Stomach (tissue), 19 donors: ENCODE measurements at regions of chr11 and their contacts with region 1.

Region 1: GRCh38 chr11:11028017-11028692 is 170.3 kb upstream of the ZBED5 start:
- DNase-seq: peak; percentile 74 to 84
- H3K4me3 ChIP-seq: no peak overlapping the region
- H3K27ac ChIP-seq: no peak overlapping the region
- H3K4me1 ChIP-seq: no peaks in the 10 kb centered on the region
- H3K27me3 ChIP-seq: no peaks in the 10 kb centered on the region
- CTCF ChIP-seq: peak in 5 of 7 experiments; percentile 34 to 71 (median 62)
- EP300 ChIP-seq: no peak
- POLR2A ChIP-seq: no peak

Region 2: DNA sequence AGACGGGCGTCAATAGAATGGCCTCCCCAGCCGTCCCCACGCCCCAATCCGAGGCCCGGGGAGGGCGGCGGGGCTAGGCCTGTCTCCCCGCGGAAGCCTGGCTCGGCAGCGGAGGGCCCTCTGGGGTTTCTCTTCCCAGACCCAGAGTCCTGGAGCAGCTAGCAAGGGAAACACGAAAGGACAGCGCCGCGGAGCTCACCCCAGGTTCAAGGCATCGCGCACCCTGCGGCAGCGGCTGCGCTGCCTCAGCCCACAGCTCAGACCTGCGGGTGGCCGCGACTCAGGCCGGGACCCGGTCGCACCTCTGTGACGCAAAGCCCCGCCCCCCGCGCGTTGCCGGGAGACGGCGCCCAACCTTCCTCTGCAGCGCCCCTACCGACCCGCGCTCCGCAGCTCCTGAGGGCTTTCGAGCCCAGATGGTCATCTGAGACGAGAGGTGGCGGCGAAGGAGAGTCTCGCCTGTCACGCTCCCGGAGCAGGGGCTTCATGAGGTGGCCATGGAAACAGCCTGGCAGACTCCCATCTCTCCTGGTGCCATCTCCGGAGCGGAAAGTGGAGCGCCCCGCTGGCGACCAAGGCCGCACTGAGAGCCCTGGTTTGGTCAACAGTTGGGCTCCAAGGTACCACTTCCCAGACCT is 487.1 kb before region 1 on chr11 and contains the start of gene RNF141:
- intact Hi-C with region 1: no loop called
- DNase-seq: peak; percentile 97 to 98
- H3K4me3 ChIP-seq: peak within 1 kb of the TSS; percentile 70 to 87 (median 80)
- H3K27ac ChIP-seq: peak within 1 kb of the TSS; percentile 89 to 96 (median 95)
- H3K4me1 ChIP-seq: peaks cover 3 to 23% (median 16%) of the 10 kb centered on the region in 4 donors
- H3K27me3 ChIP-seq: no peaks in the 10 kb centered on the region
- CTCF ChIP-seq: peak in 5 of 7 experiments; percentile 60 to 85 (median 79)
- EP300 ChIP-seq: no peak
- POLR2A ChIP-seq: peak in 2 of 4 donors; percentile 63 to 77
- total RNA-seq, gene RNF141: 6.4 to 71.2 (median 22.5) TPM

Region 3: GRCh38 chr11:10784232-10785145 is 243.7 kb before region 1 on chr11:
- intact Hi-C with region 1: loop called (anchors 5 kb)
- DNase-seq: peak in 1 of 2 donors; percentile 33
- H3K4me3 ChIP-seq: no peak overlapping the region
- H3K27ac ChIP-seq: no peak overlapping the region
- H3K4me1 ChIP-seq: no peaks in the 10 kb centered on the region
- H3K27me3 ChIP-seq: no peaks in the 10 kb centered on the region
- CTCF ChIP-seq: no peak
- EP300 ChIP-seq: no peak
- POLR2A ChIP-seq: no peak

Region 4: GRCh38 chr11:11691296-11692142 is 663.4 kb after region 1 on chr11:
- intact Hi-C with region 1: no loop called
- DNase-seq: peak in 1 of 2 donors; percentile 51
- H3K4me3 ChIP-seq: no peak overlapping the region
- H3K27ac ChIP-seq: no peak overlapping the region
- H3K4me1 ChIP-seq: peaks cover 0 to 7% (median 0%) of the 10 kb centered on the region in 4 donors
- H3K27me3 ChIP-seq: peaks cover 0 to 5% (median 0%) of the 10 kb centered on the region in 3 donors
- CTCF ChIP-seq: no peak
- EP300 ChIP-seq: no peak
- POLR2A ChIP-seq: no peak

Region 5: GRCh38 chr11:11787305-11788062 is 759.3 kb after region 1 on chr11:
- intact Hi-C with region 1: loop called (anchors 5 kb)
- DNase-seq: peak; percentile 79 to 91
- H3K4me3 ChIP-seq: no peak overlapping the region
- H3K27ac ChIP-seq: no peak overlapping the region
- H3K4me1 ChIP-seq: peaks cover 0 to 7% (median 0%) of the 10 kb centered on the region in 4 donors
- H3K27me3 ChIP-seq: no peaks in the 10 kb centered on the region
- CTCF ChIP-seq: peak in 5 of 7 experiments; percentile 69 to 88 (median 84)
- EP300 ChIP-seq: no peak
- POLR2A ChIP-seq: no peak